Mammary epithelial cell (primary cell): ENCODE measurements at regions of chr1 and their contacts with region 1.

Region 1: GRCh38 chr1:221829327-221830015 is 87.6 kb upstream of the DUSP10 start:
- DNase-seq: peak; percentile 96
- H3K4me3 ChIP-seq: no peak overlapping the region
- H3K27ac ChIP-seq: peak overlapping the region; percentile 91
- H3K4me1 ChIP-seq: peaks cover 74% of the 10 kb centered on the region
- H3K27me3 ChIP-seq: no peaks in the 10 kb centered on the region
- CTCF ChIP-seq: no peak

Region 2: DNA sequence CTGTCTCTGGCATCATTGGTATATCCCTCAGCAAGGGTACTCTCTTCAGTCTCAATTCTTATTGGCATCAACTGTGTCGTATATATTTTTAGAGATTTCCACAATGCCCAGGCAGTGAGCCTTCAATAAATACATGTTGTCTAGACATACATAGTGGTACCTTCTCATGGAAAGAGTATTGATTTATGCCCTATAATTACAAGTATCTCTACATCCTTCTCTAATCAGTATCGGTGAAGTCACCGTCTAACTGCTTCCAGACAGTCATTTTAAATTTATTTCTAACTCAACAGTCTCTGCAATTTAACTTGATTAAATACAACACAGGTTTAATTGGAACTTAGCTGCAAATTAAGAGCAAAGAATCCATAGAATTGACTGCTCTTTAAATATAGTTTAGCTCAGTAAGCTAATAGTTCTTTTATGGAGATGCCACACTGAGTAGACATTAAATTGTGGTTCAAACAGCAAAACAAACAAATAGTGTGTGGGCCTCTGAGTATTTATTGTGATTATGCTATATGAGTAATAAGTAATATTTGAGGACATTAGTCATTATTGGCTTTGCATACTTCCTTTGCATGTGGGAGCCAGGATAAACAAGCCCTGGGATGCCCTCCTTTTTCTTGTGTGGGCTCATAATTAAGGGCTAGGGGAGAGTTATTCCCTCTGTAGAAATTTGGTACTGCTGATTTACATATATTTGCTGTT is 39.3 kb after region 1 on chr1:
- CTCF ChIA-PET with region 1: no interaction called
- dilution Hi-C with region 1: no loop called
- in situ Hi-C with region 1: no loop called
- intact Hi-C with region 1: loop called (anchors 5 kb)
- DNase-seq: peak; percentile 77
- H3K4me3 ChIP-seq: no peak overlapping the region
- H3K27ac ChIP-seq: peak overlapping the region; percentile 68
- H3K4me1 ChIP-seq: peaks cover 40% of the 10 kb centered on the region
- H3K27me3 ChIP-seq: no peaks in the 10 kb centered on the region
- CTCF ChIP-seq: no peak

Region 3: DNA sequence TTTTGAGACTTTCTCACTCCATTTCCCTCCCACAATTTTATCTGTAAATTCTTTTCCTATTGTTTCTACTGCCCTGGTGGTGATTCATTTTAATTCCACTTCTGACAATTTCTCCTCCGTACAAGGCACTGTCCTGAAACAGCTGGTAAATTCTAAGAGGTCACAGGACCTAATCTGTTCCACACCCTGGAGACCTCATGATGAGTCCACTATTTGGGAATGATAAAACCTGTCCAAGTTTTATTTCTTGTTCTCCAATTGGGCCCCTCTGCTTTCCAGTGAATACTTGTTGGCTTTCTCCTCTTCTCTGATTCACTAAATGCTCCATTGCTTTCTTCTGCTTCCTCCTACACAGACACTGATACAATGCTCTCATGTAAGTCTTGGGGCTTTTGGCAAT is 255.5 kb after region 1 on chr1:
- CTCF ChIA-PET with region 1: no interaction called
- dilution Hi-C with region 1: no loop called
- in situ Hi-C with region 1: no loop called
- intact Hi-C with region 1: no loop called
- DNase-seq: peak; percentile 53
- H3K4me3 ChIP-seq: no peak overlapping the region
- H3K27ac ChIP-seq: no peak overlapping the region
- H3K4me1 ChIP-seq: no peaks in the 10 kb centered on the region
- H3K27me3 ChIP-seq: no peaks in the 10 kb centered on the region
- CTCF ChIP-seq: no peak